ENCODE measurements at regions of chr2 and their contacts with region 1.

Region 1: DNA sequence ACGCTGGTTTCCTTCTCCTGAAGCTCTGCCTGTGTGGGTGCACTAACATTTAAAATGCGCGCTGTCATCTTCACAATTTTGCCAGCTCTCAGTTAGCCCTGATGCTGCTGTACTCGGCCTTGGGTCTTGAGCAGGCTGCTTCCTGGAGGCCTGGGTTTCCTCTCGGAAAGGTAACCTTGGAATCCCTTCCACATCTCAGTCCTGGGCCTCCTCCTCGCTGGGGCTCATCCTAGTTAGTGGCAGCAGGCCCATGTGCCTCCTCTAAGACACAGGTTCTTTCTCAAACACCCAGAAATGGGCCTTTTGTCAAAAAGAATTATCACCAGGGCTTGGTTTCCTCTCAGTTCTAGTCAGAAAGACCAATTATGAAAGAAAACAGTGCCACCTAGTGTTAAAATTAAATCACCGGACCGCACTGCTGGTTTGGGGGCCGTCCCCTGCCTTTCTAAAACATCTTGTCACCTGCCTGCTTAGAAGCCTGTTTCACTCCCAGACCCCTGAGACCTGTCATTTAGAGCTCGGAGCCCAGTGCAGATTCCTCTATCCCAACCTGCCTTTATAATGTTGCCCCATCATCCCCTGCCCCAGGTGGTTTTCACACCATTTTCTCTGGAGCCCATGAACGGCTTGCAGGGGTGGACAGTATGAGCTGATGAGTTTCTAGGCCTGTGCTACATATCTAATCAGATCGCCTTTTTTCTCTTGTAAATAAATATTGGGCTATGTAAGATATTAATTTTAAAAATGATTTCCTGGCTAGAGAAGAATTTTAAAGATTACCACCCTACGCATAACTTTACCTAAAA is 42.4 kb downstream of the HK2 start:
- DNase-seq: peak; percentile 80
- ATAC-seq: peak; percentile 80
- H3K4me3 ChIP-seq: no peak overlapping the region
- H3K4me3 Mint-ChIP-seq: no peak overlapping the region
- H3K27ac ChIP-seq: no peak overlapping the region
- H3K27ac Mint-ChIP-seq: no peak overlapping the region
- H3K4me1 ChIP-seq: peaks cover 0 to 3% of the 10 kb centered on the region in 2 donors
- H3K4me1 Mint-ChIP-seq: no peaks in the 10 kb centered on the region
- H3K27me3 ChIP-seq: no peaks in the 10 kb centered on the region
- H3K27me3 Mint-ChIP-seq: no peaks in the 10 kb centered on the region
- CTCF ChIP-seq: peak; percentile 77

Region 2: DNA sequence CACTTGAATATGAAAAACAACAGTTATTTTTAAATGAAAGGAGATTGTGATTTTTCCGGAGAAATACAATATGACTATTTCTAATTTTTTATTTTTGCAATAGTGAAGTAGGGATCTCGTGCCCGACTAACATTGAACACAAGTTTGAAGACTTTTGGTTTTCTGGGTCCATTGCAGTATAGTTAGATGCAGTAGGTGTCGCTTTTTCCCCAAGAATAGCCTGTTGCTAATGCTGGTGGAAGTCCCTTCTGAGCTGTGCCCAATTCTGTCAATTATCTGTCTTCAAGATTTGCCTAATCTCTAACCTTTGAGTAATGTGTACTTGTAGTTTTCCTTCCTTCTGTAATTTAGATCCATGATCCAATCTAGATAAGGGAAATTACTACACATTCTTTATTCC is 185.7 kb before region 1 on chr2:
- CTCF ChIA-PET with region 1: interaction called, 36 read pairs
- POLR2A ChIA-PET with region 1: no interaction called
- intact Hi-C with region 1: loop called (anchors 1 kb)
- DNase-seq: peak; percentile 61
- ATAC-seq: peak; percentile 49
- H3K4me3 ChIP-seq: no peak overlapping the region
- H3K4me3 Mint-ChIP-seq: no peak overlapping the region
- H3K27ac ChIP-seq: no peak overlapping the region
- H3K27ac Mint-ChIP-seq: no peak overlapping the region
- H3K4me1 ChIP-seq: no peaks in the 10 kb centered on the region
- H3K4me1 Mint-ChIP-seq: no peaks in the 10 kb centered on the region
- H3K27me3 ChIP-seq: no peaks in the 10 kb centered on the region
- H3K27me3 Mint-ChIP-seq: peaks cover 12% of the 10 kb centered on the region
- CTCF ChIP-seq: peak; percentile 74

Region 3: GRCh38 chr2:74708883-74709282 is 167.4 kb before region 1 on chr2:
- CTCF ChIA-PET with region 1: interaction called, 269 read pairs
- POLR2A ChIA-PET with region 1: no interaction called
- intact Hi-C with region 1: no loop called
- DNase-seq: no peak
- ATAC-seq: no peak
- H3K4me3 ChIP-seq: no peak overlapping the region
- H3K4me3 Mint-ChIP-seq: no peak overlapping the region
- H3K27ac ChIP-seq: no peak overlapping the region
- H3K27ac Mint-ChIP-seq: no peak overlapping the region
- H3K4me1 ChIP-seq: no peaks in the 10 kb centered on the region
- H3K4me1 Mint-ChIP-seq: no peaks in the 10 kb centered on the region
- H3K27me3 ChIP-seq: no peaks in the 10 kb centered on the region
- H3K27me3 Mint-ChIP-seq: peaks cover 7% of the 10 kb centered on the region
- CTCF ChIP-seq: no peak

Region 4: GRCh38 chr2:74849228-74849892 is 26.9 kb before region 1 on chr2:
- CTCF ChIA-PET with region 1: interaction called, 21 read pairs
- POLR2A ChIA-PET with region 1: no interaction called
- intact Hi-C with region 1: no loop called
- DNase-seq: peak; percentile 79
- ATAC-seq: peak; percentile 80
- H3K4me3 ChIP-seq: peak overlapping the region; percentile 33 to 65 (median 48)
- H3K4me3 Mint-ChIP-seq: peak overlapping the region; percentile 92
- H3K27ac ChIP-seq: peak overlapping the region; percentile 88 to 94
- H3K27ac Mint-ChIP-seq: peak overlapping the region; percentile 99
- H3K4me1 ChIP-seq: peaks cover 58 to 68% of the 10 kb centered on the region in 2 donors
- H3K4me1 Mint-ChIP-seq: peaks cover 69% of the 10 kb centered on the region
- H3K27me3 ChIP-seq: no peaks in the 10 kb centered on the region
- H3K27me3 Mint-ChIP-seq: no peaks in the 10 kb centered on the region
- CTCF ChIP-seq: no peak

Region 5: GRCh38 chr2:75523313-75524275 is 647.3 kb after region 1 on chr2:
- CTCF ChIA-PET with region 1: no interaction called
- POLR2A ChIA-PET with region 1: no interaction called
- intact Hi-C with region 1: no loop called
- DNase-seq: no peak
- ATAC-seq: no peak
- H3K4me3 ChIP-seq: no peak overlapping the region
- H3K4me3 Mint-ChIP-seq: no peak overlapping the region
- H3K27ac ChIP-seq: no peak overlapping the region
- H3K27ac Mint-ChIP-seq: no peak overlapping the region
- H3K4me1 ChIP-seq: no peaks in the 10 kb centered on the region
- H3K4me1 Mint-ChIP-seq: no peaks in the 10 kb centered on the region
- H3K27me3 ChIP-seq: peaks cover 0 to 10% (median 4%) of the 10 kb centered on the region in 4 experiments
- H3K27me3 Mint-ChIP-seq: peaks cover 25% of the 10 kb centered on the region
- CTCF ChIP-seq: no peak

Measured in B cell (primary cell).